ENCODE measurements at regions of chr9 and their contacts with region 1.

Region 1: GRCh38 chr9:259405-260404 is 45.0 kb downstream of the DOCK8 start:
- DNase-seq: no peak
- H3K4me3 ChIP-seq: no peak overlapping the region
- H3K27ac ChIP-seq: no peak overlapping the region
- H3K4me1 ChIP-seq: no peaks in the 10 kb centered on the region
- H3K27me3 ChIP-seq: no peaks in the 10 kb centered on the region
- CTCF ChIP-seq: no peak

Region 2: GRCh38 chr9:242461-243080 is 17.1 kb before region 1 on chr9:
- intact Hi-C with region 1: loop called (anchors 1 kb)
- DNase-seq: no peak
- H3K4me3 ChIP-seq: no peak overlapping the region
- H3K27ac ChIP-seq: no peak overlapping the region
- H3K4me1 ChIP-seq: no peaks in the 10 kb centered on the region
- H3K27me3 ChIP-seq: no peaks in the 10 kb centered on the region
- CTCF ChIP-seq: no peak

Region 3: GRCh38 chr9:899440-900184 is 639.9 kb after region 1 on chr9:
- intact Hi-C with region 1: no loop called
- DNase-seq: no peak
- H3K4me3 ChIP-seq: no peak overlapping the region
- H3K27ac ChIP-seq: no peak overlapping the region
- H3K4me1 ChIP-seq: no peaks in the 10 kb centered on the region
- H3K27me3 ChIP-seq: no peaks in the 10 kb centered on the region
- CTCF ChIP-seq: no peak